Naive thymus-derived CD4-positive, alpha-beta T cell (primary cell): ENCODE measurements at regions of chr3 and their contacts with region 1.

Region 1: GRCh38 chr3:147418808-147419701 is 9.9 kb downstream of the ZIC1 start:
- DNase-seq: no peak
- ATAC-seq: no peak
- H3K4me3 ChIP-seq: no peak overlapping the region
- H3K4me3 Mint-ChIP-seq: no peak overlapping the region
- H3K27ac ChIP-seq: no peak overlapping the region
- H3K27ac Mint-ChIP-seq: no peak overlapping the region
- H3K4me1 ChIP-seq: no peaks in the 10 kb centered on the region
- H3K4me1 Mint-ChIP-seq: peaks cover 0 to 13% (median 7%) of the 10 kb centered on the region in 7 donors
- H3K27me3 ChIP-seq: peaks cover 0 to 28% of the 10 kb centered on the region in 2 donors
- H3K27me3 Mint-ChIP-seq: peaks cover 84 to 90% (median 86%) of the 10 kb centered on the region in 5 donors

Region 2: DNA sequence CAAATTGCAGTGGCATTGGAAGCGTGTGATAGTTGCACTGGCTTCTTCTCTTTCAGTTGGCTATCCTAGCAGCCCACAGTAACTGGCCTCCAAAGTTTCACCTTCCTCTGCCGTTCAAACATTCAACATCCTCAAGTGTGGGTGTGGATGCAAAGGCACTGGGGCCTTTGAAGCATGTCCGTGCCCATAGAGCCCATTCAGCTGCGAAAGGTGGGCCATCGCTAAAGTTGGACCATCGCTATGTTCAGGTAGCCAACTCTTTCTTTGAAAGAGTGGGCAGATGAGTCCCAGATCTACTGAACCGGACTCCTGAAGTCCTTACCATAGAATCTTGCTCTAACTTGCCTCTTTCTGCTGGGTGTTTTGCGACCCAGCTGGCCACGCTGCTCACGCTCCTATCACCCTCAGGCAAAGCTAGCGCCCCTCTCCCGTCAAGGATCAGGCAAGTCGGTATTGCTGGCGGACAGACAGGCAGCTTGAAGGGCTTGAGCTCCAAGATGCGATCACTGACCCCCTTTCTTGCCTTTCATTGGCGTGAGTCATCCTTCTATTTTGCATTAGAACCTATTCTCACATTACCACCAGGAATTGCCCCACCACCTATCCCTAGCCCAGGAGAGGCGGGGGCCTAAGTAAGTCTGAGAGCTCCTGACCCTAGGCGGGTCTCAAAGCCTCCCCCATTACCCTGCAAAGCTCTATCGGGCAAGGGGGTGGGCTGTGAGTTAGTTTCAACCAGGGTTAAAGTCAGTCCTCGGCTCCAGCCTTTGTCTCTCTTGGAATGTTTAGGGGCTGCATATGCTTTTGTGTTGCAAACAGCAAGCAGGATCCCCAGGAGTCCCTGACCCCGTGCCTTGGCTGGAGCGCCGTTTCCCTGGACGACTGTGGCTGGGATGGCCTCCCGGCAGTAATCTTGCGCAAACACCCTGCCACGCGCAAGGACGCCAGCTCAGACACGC is 41.4 kb before region 1 on chr3:
- CTCF ChIA-PET with region 1: no interaction called
- POLR2A ChIA-PET with region 1: no interaction called
- intact Hi-C with region 1: loop called in 1 of 2 experiments (anchors 5 kb)
- DNase-seq: no peak
- ATAC-seq: no peak
- H3K4me3 ChIP-seq: no peak overlapping the region
- H3K4me3 Mint-ChIP-seq: no peak overlapping the region
- H3K27ac ChIP-seq: no peak overlapping the region
- H3K27ac Mint-ChIP-seq: no peak overlapping the region
- H3K4me1 ChIP-seq: no peaks in the 10 kb centered on the region
- H3K4me1 Mint-ChIP-seq: no peaks in the 10 kb centered on the region
- H3K27me3 ChIP-seq: peaks cover 5 to 10% of the 10 kb centered on the region in 2 donors
- H3K27me3 Mint-ChIP-seq: peaks cover 69 to 86% (median 77%) of the 10 kb centered on the region in 5 donors